CD4-positive, alpha-beta T cell (primary cell): ENCODE measurements at regions of chr1 and their contacts with region 1.

Region 1: DNA sequence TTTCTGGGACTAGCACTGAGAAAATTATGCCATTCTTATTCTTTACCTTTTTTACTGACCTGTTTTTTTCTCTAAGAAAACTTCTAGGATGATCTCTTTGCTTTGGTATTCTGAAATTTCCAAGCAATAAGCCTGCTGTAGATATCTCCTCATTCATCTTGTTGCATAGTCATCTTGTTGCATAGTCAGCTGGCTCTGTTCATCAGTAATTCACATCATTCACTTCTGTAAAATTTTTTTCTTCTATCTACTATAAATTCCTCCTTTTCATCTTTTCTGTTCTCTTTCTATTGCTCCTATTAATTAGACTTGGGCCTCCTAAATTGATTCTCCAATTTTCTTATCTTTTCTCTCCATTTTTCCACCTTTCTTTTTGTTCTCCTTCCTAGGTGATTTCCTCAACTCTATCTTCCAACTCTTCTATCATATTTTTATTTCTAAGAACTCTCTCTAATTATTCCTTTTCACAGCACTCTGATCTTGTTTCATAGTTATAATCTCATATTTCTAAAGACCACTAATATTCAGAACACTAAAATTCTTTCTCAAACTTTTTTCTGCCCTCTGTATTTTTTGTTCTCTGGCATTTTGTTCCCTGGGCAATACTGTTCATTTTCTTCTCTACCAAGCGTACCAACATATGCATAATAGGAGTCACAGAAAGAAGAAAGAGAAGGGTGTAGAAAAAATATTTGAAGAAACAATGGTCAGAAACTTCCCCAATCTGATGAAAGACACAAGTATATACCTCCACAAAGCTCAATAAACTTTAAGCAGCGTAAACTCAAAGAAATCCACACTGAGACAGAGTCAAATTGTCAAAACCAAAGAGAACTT is 17.7 kb downstream of the TUT4 start:
- DNase-seq: no peak
- ATAC-seq: no peak
- H3K4me3 ChIP-seq: no peak overlapping the region
- H3K4me3 Mint-ChIP-seq: no peak overlapping the region
- H3K27ac ChIP-seq: no peak overlapping the region
- H3K27ac Mint-ChIP-seq: no peak overlapping the region
- H3K4me1 ChIP-seq: peaks cover 13% of the 10 kb centered on the region
- H3K4me1 Mint-ChIP-seq: peaks cover 66% of the 10 kb centered on the region
- H3K27me3 ChIP-seq: no peaks in the 10 kb centered on the region
- H3K27me3 Mint-ChIP-seq: no peaks in the 10 kb centered on the region
- CTCF ChIP-seq: no peak

Region 2: GRCh38 chr1:52520148-52520547 is 15.0 kb before region 1 on chr1:
- CTCF ChIA-PET with region 1: no interaction called
- POLR2A ChIA-PET with region 1: no interaction called
- intact Hi-C with region 1: loop called in 1 of 2 experiments (anchors 2 kb)
- DNase-seq: no peak
- ATAC-seq: no peak
- H3K4me3 ChIP-seq: no peak overlapping the region
- H3K4me3 Mint-ChIP-seq: no peak overlapping the region
- H3K27ac ChIP-seq: no peak overlapping the region
- H3K27ac Mint-ChIP-seq: no peak overlapping the region
- H3K4me1 ChIP-seq: peaks cover 9% of the 10 kb centered on the region
- H3K4me1 Mint-ChIP-seq: peaks cover 50% of the 10 kb centered on the region
- H3K27me3 ChIP-seq: no peaks in the 10 kb centered on the region
- H3K27me3 Mint-ChIP-seq: no peaks in the 10 kb centered on the region
- CTCF ChIP-seq: no peak